Naive thymus-derived CD4-positive, alpha-beta T cell (primary cell): ENCODE measurements at regions of chr6 and their contacts with region 1.

Region 1: DNA sequence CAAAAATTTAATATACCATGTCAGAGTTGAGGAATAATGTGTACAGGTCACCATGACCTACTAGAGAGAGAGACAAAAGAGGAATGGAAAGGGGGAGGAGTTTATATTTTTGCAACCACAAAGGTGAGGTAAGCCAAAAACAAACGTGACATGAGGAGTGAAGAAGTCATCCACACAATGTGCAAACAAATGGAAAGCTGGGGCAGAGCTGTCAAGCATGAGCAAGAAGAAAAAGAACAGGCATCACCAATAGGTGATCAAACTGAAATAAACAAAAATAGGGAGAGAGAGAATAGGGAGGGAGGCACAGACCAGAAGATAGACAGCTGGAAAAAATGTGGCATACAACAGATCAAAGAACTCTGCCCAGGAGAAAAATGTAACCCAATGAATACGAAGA is 15.5 kb downstream of the RARS2 start:
- DNase-seq: no peak
- ATAC-seq: no peak
- H3K4me3 ChIP-seq: no peak overlapping the region
- H3K4me3 Mint-ChIP-seq: peak overlapping the region in 9 of 10 donors; percentile 9 to 60 (median 57)
- H3K27ac ChIP-seq: no peak overlapping the region
- H3K27ac Mint-ChIP-seq: peak overlapping the region; percentile 9 to 87 (median 62)
- H3K4me1 ChIP-seq: peaks cover 19 to 24% of the 10 kb centered on the region in 2 donors
- H3K4me1 Mint-ChIP-seq: peaks cover 33 to 84% (median 72%) of the 10 kb centered on the region in 7 donors
- H3K27me3 ChIP-seq: no peaks in the 10 kb centered on the region
- H3K27me3 Mint-ChIP-seq: no peaks in the 10 kb centered on the region

Region 2: DNA sequence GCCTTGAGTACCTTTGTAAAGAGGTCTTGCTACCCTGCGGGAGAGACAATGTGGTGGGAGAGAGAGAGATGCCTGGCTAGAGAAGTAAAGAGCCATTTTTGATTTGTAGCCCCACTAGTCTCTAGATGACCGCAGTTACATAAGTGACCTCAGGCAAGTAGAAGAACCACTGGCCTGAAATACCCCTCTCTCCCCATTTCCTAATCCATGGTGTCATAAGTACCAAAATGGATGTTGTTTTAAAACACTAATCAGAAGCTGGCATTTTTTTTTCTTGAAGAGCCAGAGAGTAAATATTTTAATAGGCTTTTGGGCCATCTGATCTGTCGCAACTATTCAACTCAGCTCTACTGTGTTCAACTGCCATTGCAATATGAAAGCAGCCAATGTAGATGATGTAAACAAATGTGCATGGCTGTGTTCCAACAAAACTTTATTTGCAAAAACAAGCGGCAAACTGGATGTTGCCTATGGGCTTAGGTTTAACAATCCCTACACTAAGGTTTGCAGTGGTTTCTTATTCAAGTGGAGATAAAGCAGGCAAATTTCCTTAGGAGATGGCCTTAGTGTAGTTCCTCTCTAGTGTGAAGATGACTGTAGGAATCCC is 21.0 kb before region 1 on chr6:
- CTCF ChIA-PET with region 1: no interaction called
- POLR2A ChIA-PET with region 1: no interaction called
- intact Hi-C with region 1: loop called in 1 of 2 experiments (anchors 2 kb)
- DNase-seq: no peak
- ATAC-seq: no peak
- H3K4me3 ChIP-seq: no peak overlapping the region
- H3K4me3 Mint-ChIP-seq: no peak overlapping the region
- H3K27ac ChIP-seq: no peak overlapping the region
- H3K27ac Mint-ChIP-seq: peak overlapping the region in 2 of 9 donors; percentile 11 to 17
- H3K4me1 ChIP-seq: no peaks in the 10 kb centered on the region
- H3K4me1 Mint-ChIP-seq: peaks cover 2 to 30% (median 10%) of the 10 kb centered on the region in 7 donors
- H3K27me3 ChIP-seq: no peaks in the 10 kb centered on the region
- H3K27me3 Mint-ChIP-seq: no peaks in the 10 kb centered on the region

Region 3: GRCh38 chr6:87645080-87645479 is 70.8 kb after region 1 on chr6:
- CTCF ChIA-PET with region 1: no interaction called
- POLR2A ChIA-PET with region 1: no interaction called
- intact Hi-C with region 1: no loop called
- DNase-seq: peak in 2 of 9 donors; percentile 12 to 30
- ATAC-seq: peak; percentile 40
- H3K4me3 ChIP-seq: peak overlapping the region; percentile 32
- H3K4me3 Mint-ChIP-seq: peak overlapping the region; percentile 30 to 86 (median 78)
- H3K27ac ChIP-seq: no peak overlapping the region
- H3K27ac Mint-ChIP-seq: peak overlapping the region; percentile 49 to 87 (median 78)
- H3K4me1 ChIP-seq: peaks cover 0 to 8% of the 10 kb centered on the region in 2 donors
- H3K4me1 Mint-ChIP-seq: peaks cover 0 to 25% (median 19%) of the 10 kb centered on the region in 7 donors
- H3K27me3 ChIP-seq: no peaks in the 10 kb centered on the region
- H3K27me3 Mint-ChIP-seq: no peaks in the 10 kb centered on the region

Region 4: DNA sequence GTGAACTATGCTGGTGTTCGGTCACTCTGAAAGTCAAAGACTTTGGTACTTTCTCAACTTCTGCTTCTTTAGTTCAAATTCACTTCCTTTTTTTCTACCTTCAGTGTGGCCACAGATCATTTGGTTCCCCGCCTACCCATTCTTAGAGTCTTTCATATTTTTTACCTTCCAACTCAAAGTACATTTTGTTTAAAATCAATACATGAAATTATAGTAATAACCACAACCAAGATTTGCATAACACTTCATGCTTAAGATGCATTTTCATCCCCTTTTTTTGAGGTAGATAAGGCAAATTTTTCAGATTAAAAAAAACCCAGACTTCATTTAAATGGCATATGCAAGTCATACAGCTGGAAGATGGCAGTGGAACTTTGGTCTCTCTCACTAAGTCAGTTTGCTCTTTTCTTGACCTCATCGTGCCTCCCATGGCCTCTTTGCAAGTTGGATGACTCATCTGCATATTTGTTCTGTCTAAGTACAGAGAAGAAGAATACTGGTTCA is 603.7 kb after region 1 on chr6:
- CTCF ChIA-PET with region 1: no interaction called
- POLR2A ChIA-PET with region 1: no interaction called
- intact Hi-C with region 1: loop called in 1 of 2 experiments (anchors 5 kb)
- DNase-seq: no peak
- ATAC-seq: no peak
- H3K4me3 ChIP-seq: no peak overlapping the region
- H3K4me3 Mint-ChIP-seq: no peak overlapping the region
- H3K27ac ChIP-seq: no peak overlapping the region
- H3K27ac Mint-ChIP-seq: no peak overlapping the region
- H3K4me1 ChIP-seq: no peaks in the 10 kb centered on the region
- H3K4me1 Mint-ChIP-seq: no peaks in the 10 kb centered on the region
- H3K27me3 ChIP-seq: no peaks in the 10 kb centered on the region
- H3K27me3 Mint-ChIP-seq: peaks cover 4 to 51% (median 45%) of the 10 kb centered on the region in 5 donors